Mammary epithelial cell (primary cell): ENCODE measurements at regions of chr1 and their contacts with region 1.

Region 1: GRCh38 chr1:62687903-62688686 is at the start of gene DOCK7:
- DNase-seq: peak; percentile 79
- H3K4me3 ChIP-seq: peak within 1 kb of the TSS; percentile 54 to 83 (median 55)
- H3K27ac ChIP-seq: peak within 1 kb of the TSS; percentile 75
- H3K4me1 ChIP-seq: peaks cover 44% of the 10 kb centered on the region
- H3K27me3 ChIP-seq: no peaks in the 10 kb centered on the region
- CTCF ChIP-seq: no peak
- total RNA-seq, gene DOCK7: 76.2 to 83.9 TPM

Region 2: GRCh38 chr1:62530516-62531154 is 157.5 kb before region 1 on chr1:
- CTCF ChIA-PET with region 1: no interaction called
- dilution Hi-C with region 1: no loop called
- in situ Hi-C with region 1: no loop called
- intact Hi-C with region 1: loop called (anchors 5 kb)
- DNase-seq: peak; percentile 49
- H3K4me3 ChIP-seq: no peak overlapping the region
- H3K27ac ChIP-seq: no peak overlapping the region
- H3K4me1 ChIP-seq: no peaks in the 10 kb centered on the region
- H3K27me3 ChIP-seq: no peaks in the 10 kb centered on the region
- CTCF ChIP-seq: peak; percentile 59 to 70